Calu3 (cell line): ENCODE measurements at regions of chr21 and their contacts with region 1.

Region 1: DNA sequence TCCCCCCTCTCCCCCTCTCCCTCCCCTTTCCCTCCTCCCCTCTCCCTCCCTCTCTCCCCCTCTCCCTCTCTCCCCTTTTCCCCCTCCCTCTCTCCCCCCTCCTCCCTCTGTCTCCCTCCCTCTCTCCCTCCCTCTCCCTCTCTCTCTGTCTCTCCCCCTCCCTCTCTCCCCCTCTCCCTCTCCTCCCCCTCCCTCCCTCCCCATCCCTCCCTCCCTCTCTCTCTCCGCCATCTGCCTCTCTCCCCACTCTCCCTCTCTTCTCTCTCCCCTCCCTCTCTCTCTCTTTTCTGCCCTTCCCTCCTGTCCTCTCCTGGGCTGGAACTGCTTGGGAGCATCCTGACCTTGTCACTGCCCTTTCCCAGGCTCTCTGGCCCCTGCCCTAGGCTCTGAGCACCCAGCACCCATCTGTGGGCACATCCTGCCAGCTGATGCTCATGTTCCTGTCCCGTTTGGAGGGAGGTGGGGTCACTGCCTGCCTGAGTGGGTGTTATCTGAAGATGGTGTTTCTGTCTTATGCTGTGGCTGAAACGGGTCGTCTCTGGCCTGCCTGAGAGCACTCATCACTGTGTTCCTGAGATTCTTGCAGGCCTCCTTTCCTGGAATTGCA is 10.8 kb downstream of the FTCD start:
- DNase-seq: no peak
- H3K4me3 Mint-ChIP-seq: peak overlapping the region; percentile 65
- H3K27ac Mint-ChIP-seq: peak overlapping the region; percentile 93
- H3K4me1 Mint-ChIP-seq: peaks cover 11% of the 10 kb centered on the region
- H3K27me3 Mint-ChIP-seq: peaks cover 15% of the 10 kb centered on the region
- CTCF ChIP-seq: no peak

Region 2: GRCh38 chr21:45780647-45781046 is 363.9 kb before region 1 on chr21:
- CTCF ChIA-PET with region 1: no interaction called
- intact Hi-C with region 1: no loop called
- DNase-seq: no peak
- H3K4me3 Mint-ChIP-seq: no peak overlapping the region
- H3K27ac Mint-ChIP-seq: no peak overlapping the region
- H3K4me1 Mint-ChIP-seq: no peaks in the 10 kb centered on the region
- H3K27me3 Mint-ChIP-seq: peaks cover 53% of the 10 kb centered on the region
- CTCF ChIP-seq: no peak

Region 3: DNA sequence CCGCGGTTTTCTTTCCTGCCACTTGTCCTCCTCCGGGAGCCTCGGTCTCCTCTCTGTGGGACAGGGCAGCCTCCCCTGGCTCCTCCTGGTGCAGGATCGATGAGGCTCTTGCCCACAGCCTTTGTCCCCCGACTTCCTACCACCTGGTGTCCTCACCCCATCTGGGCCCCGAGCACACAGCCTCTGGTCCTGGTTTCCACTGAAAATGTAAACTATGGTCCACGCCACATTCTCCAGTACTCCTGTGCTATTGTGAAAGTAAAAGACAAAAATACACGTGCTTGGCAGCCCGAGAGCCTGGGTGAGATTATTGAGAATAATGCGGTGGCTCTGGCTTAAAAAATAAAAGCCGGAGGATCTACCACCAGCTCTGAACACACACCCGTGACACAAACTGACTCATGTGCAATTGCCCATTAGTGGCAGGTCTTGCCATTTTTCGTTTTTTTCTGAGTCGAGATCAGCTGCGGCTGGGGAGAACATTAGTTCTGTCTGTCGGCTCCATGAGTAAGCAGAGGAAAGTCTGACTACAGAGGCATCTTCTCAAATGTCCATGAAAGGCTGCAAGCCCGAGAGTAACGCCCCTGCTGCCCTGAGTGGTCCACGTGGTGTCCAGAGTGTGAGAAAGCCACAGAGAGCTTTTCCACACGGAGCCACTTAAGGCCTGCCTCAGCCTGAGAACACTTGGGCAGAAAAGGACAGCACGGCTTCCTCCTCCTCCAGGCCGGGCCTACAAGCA is 52.4 kb before region 1 on chr21:
- CTCF ChIA-PET with region 1: no interaction called
- intact Hi-C with region 1: no loop called
- DNase-seq: no peak
- H3K4me3 Mint-ChIP-seq: no peak overlapping the region
- H3K27ac Mint-ChIP-seq: no peak overlapping the region
- H3K4me1 Mint-ChIP-seq: no peaks in the 10 kb centered on the region
- H3K27me3 Mint-ChIP-seq: peaks cover 14% of the 10 kb centered on the region
- CTCF ChIP-seq: no peak

Region 4: DNA sequence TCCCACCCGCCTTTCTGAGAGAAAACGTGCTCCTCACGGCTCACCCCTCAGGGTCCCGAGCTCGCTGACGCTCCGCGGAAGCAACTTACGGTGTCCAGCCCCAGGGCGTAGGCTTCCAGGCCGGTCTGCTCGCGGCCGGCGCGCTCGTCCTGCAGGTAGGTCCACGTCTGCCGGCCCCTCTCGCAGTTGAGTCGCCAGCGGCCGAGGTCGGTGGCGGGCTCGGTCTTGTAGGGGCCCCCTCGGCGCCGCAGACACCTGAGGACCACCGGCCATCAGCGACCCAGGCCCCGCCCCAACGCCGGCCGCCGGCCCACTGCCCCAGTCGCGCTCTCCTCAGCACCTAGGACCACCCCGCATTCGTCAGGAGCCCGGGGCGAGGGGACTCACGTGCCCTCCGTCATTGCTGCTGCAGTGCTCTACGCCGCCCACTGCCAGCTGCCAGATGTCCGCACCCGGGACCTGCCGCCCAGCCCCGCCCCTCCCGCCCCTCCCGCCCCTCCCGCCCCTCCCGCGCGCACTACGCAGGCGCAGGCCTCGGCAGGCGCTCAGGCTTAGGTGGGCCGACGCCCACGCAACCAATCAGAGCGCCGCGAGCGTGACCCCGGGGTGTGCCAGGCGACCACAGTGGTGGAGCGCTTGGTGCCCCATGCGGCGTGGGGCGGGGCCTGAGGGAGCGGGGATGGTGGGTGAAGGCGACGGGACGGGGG is 83.9 kb after region 1 on chr21 and contains the start of gene LSS:
- CTCF ChIA-PET with region 1: no interaction called
- intact Hi-C with region 1: loop called (anchors 10 kb)
- DNase-seq: peak; percentile 98
- H3K4me3 Mint-ChIP-seq: peak within 1 kb of the TSS; percentile 83
- H3K27ac Mint-ChIP-seq: peak within 1 kb of the TSS; percentile 85
- H3K4me1 Mint-ChIP-seq: peaks cover 26% of the 10 kb centered on the region
- H3K27me3 Mint-ChIP-seq: no peaks in the 10 kb centered on the region
- CTCF ChIP-seq: no peak
- total RNA-seq, gene LSS: 53.3 and 55.1 TPM in 2 replicates